ENCODE measurements at regions of chr16 and their contacts with region 1.

Region 1: DNA sequence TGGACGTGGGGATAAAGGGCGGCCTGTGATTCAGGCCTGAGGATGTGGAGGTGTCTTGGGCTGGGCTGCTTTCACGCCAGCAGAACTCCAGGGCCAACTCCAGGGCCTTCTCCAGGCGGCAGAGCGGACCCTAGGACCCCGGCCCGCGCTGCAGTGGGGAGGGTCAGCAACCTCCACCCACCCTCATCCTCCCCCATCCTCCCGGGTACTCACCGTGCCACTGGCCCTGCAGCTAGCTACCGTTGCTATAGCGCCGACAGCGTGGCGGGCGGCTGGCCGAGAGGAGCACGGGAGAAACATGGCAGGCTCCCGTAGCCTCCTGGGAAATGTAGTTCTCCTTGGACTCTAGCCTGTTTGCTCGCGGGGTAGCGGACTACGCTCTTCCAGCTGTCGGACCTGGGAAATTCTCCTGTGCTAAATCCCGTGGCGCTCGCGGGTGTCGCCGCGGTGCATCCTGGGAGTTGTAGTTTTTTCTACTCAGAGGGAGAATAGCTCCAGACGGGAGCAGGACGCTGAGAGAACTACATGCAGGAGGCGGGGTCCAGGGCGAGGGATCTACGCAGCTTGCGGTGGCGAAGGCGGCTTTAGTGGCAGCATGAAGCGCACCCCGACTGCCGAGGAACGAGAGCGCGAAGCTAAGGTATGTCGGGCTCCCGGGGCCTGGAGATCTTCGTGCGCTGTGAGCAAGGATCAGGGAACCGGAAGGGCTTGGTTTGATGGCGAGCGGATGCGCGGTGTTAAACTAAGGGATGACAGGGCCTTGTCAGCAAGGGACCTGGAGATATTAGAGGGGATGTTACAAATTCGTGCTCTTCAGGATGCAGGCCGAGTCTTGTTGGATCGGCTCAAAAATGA is at the starts of genes FTO and RPGRIP1L:
- DNase-seq: peak; percentile 96
- H3K4me3 Mint-ChIP-seq: peak within 1 kb of the TSS; percentile 96
- H3K27ac Mint-ChIP-seq: peak within 1 kb of the TSS; percentile 91
- H3K4me1 Mint-ChIP-seq: peaks cover 36% of the 10 kb centered on the region
- H3K27me3 Mint-ChIP-seq: no peaks in the 10 kb centered on the region
- total RNA-seq, gene FTO: 56.4 and 63.0 TPM in 2 replicates
- total RNA-seq, gene RPGRIP1L: 9.3 and 10.9 TPM in 2 replicates

Region 2: DNA sequence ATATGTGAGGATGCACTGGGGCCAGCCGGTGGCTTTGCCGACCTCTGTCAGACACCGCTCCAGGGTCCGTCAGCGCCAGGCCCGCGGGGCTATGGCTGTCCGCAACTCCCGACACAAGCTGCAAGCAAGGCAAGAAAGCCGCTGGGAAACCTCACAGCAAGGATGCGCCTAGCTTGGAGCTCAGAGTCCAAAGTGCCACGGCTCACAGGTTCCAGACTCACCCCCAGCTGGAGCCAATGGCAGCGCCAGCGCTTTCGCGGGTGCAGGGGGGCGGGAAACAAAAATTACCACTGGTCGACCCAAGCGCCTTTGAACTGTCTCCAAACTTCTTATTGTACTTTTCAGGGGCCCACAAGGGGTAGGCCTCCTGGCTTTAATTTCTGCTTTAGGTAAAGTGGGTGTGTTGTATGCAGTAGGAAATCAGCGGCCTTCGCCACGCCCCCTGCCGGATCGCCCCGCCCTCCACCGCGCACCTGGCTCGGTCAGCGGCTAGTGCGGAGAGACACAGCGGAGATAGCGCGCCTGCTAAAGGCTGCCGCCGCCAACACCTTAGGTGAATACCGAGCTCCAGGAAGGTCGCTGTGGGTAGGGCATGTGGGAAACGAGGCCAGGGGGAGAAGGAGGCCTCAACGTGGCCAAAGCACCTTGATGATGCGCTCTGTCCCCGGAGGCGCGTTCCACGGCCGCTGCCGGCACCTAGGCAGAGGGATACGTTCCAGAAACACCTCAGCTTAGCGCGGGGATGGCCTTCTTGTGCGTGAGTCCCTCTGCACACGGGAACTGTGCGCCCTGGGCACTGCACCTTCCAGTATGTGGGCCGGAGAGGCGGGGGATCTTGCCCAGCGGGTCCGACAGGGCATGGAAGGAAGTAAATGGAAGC is 330.6 kb before region 1 on chr16:
- intact Hi-C with region 1: loop called (anchors 1 kb)
- DNase-seq: peak; percentile 64
- H3K4me3 Mint-ChIP-seq: peak overlapping the region; percentile 82
- H3K27ac Mint-ChIP-seq: no peak overlapping the region
- H3K4me1 Mint-ChIP-seq: peaks cover 20% of the 10 kb centered on the region
- H3K27me3 Mint-ChIP-seq: peaks cover 28% of the 10 kb centered on the region

Region 3: GRCh38 chr16:53503270-53503923 is 200.4 kb before region 1 on chr16:
- intact Hi-C with region 1: loop called (anchors 1 kb)
- DNase-seq: peak; percentile 100
- H3K4me3 Mint-ChIP-seq: peak overlapping the region; percentile 87
- H3K27ac Mint-ChIP-seq: peak overlapping the region; percentile 93
- H3K4me1 Mint-ChIP-seq: peaks cover 70% of the 10 kb centered on the region
- H3K27me3 Mint-ChIP-seq: no peaks in the 10 kb centered on the region

Region 4: DNA sequence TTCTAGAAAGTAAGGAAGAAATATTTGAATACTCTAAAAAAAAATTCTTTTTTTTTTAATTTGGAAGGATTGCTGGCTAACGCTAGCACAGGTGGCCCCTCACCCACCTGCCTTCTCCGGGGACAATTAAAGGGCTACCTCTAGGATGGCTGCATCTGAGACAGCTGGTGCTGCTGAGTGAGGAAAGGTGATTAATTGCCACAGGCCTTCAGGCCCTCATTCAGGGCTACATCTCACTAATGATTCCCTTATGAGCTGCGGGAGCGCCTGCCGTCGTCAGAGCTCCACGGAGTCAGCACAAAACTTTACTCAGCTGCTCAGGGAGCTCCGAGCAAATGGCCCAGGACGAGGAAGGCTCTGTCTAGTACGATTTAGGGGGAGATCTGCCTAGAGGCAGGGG is 173.8 kb before region 1 on chr16:
- intact Hi-C with region 1: loop called (anchors 1 kb)
- DNase-seq: no peak
- H3K4me3 Mint-ChIP-seq: no peak overlapping the region
- H3K27ac Mint-ChIP-seq: no peak overlapping the region
- H3K4me1 Mint-ChIP-seq: peaks cover 18% of the 10 kb centered on the region
- H3K27me3 Mint-ChIP-seq: no peaks in the 10 kb centered on the region

Region 5: DNA sequence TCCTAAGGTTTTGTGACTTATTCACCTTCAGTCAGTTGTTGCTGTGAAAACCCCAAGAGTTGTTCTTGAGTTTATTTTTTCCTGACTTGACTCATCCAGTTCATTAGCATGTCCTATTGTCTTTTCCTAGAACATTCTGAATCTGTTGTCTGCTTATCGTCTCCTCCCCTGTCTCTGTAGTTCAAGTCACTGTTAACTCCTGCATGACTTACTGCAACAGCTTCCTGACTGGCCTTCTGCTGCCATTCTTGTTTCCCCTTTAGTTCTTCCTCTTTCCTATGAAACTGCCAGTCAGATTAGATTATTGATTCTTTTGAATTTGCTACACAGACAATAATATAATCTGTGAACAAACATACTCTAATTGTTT is 161.7 kb after region 1 on chr16:
- intact Hi-C with region 1: loop called (anchors 5 kb)
- DNase-seq: no peak
- H3K4me3 Mint-ChIP-seq: no peak overlapping the region
- H3K27ac Mint-ChIP-seq: peak overlapping the region; percentile 69
- H3K4me1 Mint-ChIP-seq: peaks cover 32% of the 10 kb centered on the region
- H3K27me3 Mint-ChIP-seq: no peaks in the 10 kb centered on the region

Region 6: DNA sequence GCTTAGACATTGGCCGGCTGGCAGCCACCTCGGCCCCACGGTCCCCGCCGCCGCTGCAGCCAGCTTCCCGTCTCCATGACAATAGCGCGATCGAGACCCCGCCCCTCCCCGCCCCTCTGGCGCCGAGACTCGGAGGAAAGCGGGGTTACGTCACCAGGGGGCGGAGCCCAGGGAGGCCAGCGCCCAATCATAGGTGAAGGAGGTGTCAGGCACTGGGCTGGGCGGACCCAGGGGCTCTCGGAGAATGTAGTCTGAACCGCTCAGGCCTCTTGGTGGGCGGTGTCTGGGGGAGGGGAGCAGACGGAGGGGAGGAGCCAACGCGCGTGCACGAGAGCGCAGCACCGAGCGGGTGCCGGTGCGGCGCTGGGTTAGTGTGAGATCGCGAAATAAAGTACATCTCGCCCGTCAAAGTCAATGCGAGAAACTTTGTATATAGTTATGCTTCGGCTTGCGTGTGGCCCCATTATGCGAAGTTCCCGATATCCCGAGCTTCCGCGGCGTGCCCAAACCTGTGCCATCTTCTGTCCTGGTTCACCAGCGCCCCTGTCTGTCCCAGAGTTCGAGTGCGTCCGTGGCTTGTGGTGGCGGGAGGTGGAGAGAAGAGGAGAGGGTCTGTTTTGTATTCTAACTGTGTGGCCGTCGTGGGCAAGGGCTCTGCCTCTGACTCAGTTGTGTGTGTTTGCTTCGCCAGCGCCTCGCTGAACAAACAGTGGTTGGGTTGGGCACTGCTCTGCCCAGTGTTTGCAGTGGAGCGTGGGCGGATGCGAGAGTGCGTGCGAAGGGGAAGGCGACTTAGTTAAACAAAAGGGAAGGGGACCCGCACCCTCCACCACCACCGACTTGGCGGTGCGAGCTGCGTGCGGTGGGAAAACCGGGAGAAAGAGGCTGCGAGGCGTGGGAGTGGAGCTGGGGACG is 1225.5 kb after region 1 on chr16:
- intact Hi-C with region 1: loop called (anchors 1 kb)
- DNase-seq: peak; percentile 89
- H3K4me3 Mint-ChIP-seq: peak overlapping the region; percentile 88
- H3K27ac Mint-ChIP-seq: peak overlapping the region; percentile 88
- H3K4me1 Mint-ChIP-seq: peaks cover 21% of the 10 kb centered on the region
- H3K27me3 Mint-ChIP-seq: peaks cover 68% of the 10 kb centered on the region

Measured in activated T-helper 1 cell treated with anti-CD3 and anti-CD28 coated beads, Interleukin-12 subunit alpha, Interleukin-12 subunit beta, Interleukin-2, Interleukin-4 antibody, amounts not matched to agents 30 ng/mL and 10 ng/mL and 1 ng/mL, durations not matched to agents 14 hours and 24 hours and 36 hours (primary cell).